ENCODE measurements at regions of chr12 and their contacts with region 1.

Region 1: DNA sequence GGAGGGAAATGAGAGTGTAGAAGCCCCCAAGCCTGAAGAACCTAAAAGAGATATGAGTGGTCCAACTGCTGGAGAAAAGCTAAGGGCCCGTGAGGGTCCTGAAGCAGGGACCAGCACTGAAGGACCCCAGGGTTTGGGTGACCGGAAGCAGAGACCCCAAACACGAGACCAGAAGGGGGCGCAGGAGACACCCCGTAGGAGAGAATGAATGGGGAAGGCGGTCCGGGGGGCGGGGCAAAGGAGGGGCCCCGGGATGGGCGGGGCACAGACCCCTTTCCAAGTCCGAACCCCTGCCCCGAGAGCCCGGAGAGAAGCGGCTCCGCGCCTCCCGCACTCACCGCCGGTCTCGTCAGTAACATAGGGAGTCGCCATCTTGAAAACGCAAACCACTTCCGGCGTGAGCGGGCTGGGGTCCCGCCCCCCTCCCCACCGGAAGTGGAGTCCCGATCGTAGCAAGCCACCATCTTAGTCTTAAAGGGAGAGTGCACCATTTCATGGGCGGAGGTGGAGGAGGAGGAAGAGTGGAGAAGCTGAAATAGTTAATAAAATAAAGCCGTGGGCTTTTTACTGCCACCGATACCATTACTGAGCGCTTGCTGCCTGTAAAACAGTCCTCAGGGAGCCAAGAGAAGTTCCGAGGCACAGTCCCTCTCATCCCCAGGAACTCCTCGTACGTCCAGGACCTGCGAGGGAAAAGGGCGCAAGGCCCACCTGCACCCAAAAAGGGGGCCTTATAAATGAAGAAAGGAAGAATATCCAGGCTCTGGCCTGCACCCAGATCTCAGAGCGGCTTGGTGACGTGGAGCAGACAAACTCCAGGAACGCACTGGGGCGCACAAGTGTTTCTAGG is 731 bp downstream of the PYM1 start:
- DNase-seq: peak; percentile 75 to 96 (median 88)
- ATAC-seq: peak; percentile 35
- H3K4me3 ChIP-seq: peak overlapping the region; percentile 90 to 98
- H3K4me3 Mint-ChIP-seq: peak overlapping the region; percentile 99
- H3K27ac ChIP-seq: peak overlapping the region; percentile 65 to 80
- H3K27ac Mint-ChIP-seq: peak overlapping the region; percentile 95
- H3K4me1 ChIP-seq: peaks cover 40% of the 10 kb centered on the region
- H3K4me1 Mint-ChIP-seq: peaks cover 51% of the 10 kb centered on the region
- H3K27me3 ChIP-seq: no peaks in the 10 kb centered on the region
- H3K27me3 Mint-ChIP-seq: no peaks in the 10 kb centered on the region
- CTCF ChIP-seq: peak; percentile 70

Region 2: GRCh38 chr12:55817346-55818139 is 109.4 kb before region 1 on chr12 and contains the starts of genes ORMDL2 and SARNP:
- CTCF ChIA-PET with region 1: interaction called, 10 read pairs
- POLR2A ChIA-PET with region 1: interaction called, 43 read pairs
- intact Hi-C with region 1: loop called (anchors 1 to 2 kb)
- DNase-seq: peak; percentile 88 to 100 (median 94)
- ATAC-seq: peak; percentile 91
- H3K4me3 ChIP-seq: peak within 1 kb of the TSS; percentile 81 to 89
- H3K4me3 Mint-ChIP-seq: no peak within 1 kb of the TSS
- H3K27ac ChIP-seq: peak within 1 kb of the TSS; percentile 81 to 89
- H3K27ac Mint-ChIP-seq: no peak within 1 kb of the TSS
- H3K4me1 ChIP-seq: peaks cover 38% of the 10 kb centered on the region
- H3K4me1 Mint-ChIP-seq: peaks cover 44% of the 10 kb centered on the region
- H3K27me3 ChIP-seq: no peaks in the 10 kb centered on the region
- H3K27me3 Mint-ChIP-seq: no peaks in the 10 kb centered on the region
- CTCF ChIP-seq: no peak
- total RNA-seq, gene ORMDL2: 13.2 to 15.1 TPM
- total RNA-seq, gene SARNP: 48.0 to 50.3 TPM

Region 3: DNA sequence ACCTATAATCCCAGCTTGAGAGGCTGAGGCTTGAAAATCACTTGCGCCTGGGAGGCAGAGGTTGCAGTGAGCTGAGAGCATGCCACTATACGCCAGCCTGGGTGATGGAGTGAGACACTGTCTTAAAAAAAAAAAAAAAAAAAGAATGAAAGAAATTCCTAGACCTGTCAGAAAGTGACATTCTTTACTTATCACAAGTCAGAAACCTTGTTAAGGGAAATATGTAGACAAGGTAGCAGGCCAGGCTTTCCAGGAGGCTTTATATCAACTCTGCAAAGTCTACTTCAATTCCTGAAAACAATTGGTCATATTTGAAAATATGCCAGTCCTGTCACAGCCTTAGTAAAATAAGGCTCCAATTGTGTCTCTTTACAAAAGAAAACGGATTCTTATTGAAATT is 65.1 kb before region 1 on chr12:
- CTCF ChIA-PET with region 1: no interaction called
- POLR2A ChIA-PET with region 1: no interaction called
- intact Hi-C with region 1: no loop called
- DNase-seq: no peak
- ATAC-seq: no peak
- H3K4me3 ChIP-seq: no peak overlapping the region
- H3K4me3 Mint-ChIP-seq: no peak overlapping the region
- H3K27ac ChIP-seq: no peak overlapping the region
- H3K27ac Mint-ChIP-seq: no peak overlapping the region
- H3K4me1 ChIP-seq: no peaks in the 10 kb centered on the region
- H3K4me1 Mint-ChIP-seq: no peaks in the 10 kb centered on the region
- H3K27me3 ChIP-seq: no peaks in the 10 kb centered on the region
- H3K27me3 Mint-ChIP-seq: no peaks in the 10 kb centered on the region
- CTCF ChIP-seq: no peak

Region 4: GRCh38 chr12:55955800-55956508 is 29.0 kb after region 1 on chr12:
- CTCF ChIA-PET with region 1: interaction called, 4 read pairs
- POLR2A ChIA-PET with region 1: interaction called, 15 read pairs
- intact Hi-C with region 1: no loop called
- DNase-seq: peak in 8 of 9 experiments; percentile 33 to 69 (median 53)
- ATAC-seq: peak; percentile 80
- H3K4me3 ChIP-seq: no peak overlapping the region
- H3K4me3 Mint-ChIP-seq: no peak overlapping the region
- H3K27ac ChIP-seq: peak overlapping the region in 1 of 2 experiments; percentile 18
- H3K27ac Mint-ChIP-seq: peak overlapping the region; percentile 88
- H3K4me1 ChIP-seq: no peaks in the 10 kb centered on the region
- H3K4me1 Mint-ChIP-seq: peaks cover 31% of the 10 kb centered on the region
- H3K27me3 ChIP-seq: no peaks in the 10 kb centered on the region
- H3K27me3 Mint-ChIP-seq: no peaks in the 10 kb centered on the region
- CTCF ChIP-seq: peak; percentile 34

Region 5: DNA sequence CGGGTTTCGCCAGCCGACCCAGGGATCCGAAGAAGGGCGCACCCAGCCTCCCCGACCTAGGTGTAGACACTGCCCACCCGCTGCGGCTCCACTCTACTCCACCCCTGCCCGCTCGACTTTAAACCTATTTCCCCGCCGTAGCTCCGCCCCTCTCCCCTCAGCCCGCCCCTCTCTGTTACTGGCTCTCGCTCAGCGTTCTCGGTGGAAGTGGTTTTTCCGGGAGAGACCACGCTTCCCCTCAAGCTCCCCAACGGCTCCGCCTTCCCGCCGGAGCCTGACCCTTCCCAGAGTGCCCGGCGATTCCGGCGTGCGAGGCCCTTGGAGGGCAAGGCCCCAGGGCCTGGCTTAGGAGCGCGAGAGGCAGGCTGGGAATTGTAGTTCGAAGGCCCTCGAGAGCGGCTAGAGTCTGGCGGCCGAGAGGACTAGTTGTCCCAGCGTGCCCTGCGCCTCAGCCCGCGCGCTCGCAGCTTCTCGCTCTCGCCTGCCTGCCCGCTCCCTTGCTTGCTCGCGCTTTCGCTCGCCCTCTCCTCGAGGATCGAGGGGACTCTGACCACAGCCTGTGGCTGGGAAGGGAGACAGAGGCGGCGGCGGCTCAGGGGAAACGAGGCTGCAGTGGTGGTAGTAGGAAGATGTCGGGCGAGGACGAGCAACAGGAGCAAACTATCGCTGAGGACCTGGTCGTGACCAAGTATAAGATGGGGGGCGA is 177.3 kb after region 1 on chr12 and contains the start of gene PA2G4:
- CTCF ChIA-PET with region 1: no interaction called
- POLR2A ChIA-PET with region 1: no interaction called
- intact Hi-C with region 1: loop called (anchors 2 to 5 kb)
- DNase-seq: peak; percentile 91 to 99 (median 96)
- ATAC-seq: peak; percentile 88
- H3K4me3 ChIP-seq: peak within 1 kb of the TSS; percentile 90
- H3K4me3 Mint-ChIP-seq: peak within 1 kb of the TSS; percentile 99
- H3K27ac ChIP-seq: peak within 1 kb of the TSS; percentile 53 to 70
- H3K27ac Mint-ChIP-seq: peak within 1 kb of the TSS; percentile 98
- H3K4me1 ChIP-seq: peaks cover 37% of the 10 kb centered on the region
- H3K4me1 Mint-ChIP-seq: peaks cover 66% of the 10 kb centered on the region
- H3K27me3 ChIP-seq: no peaks in the 10 kb centered on the region
- H3K27me3 Mint-ChIP-seq: no peaks in the 10 kb centered on the region
- CTCF ChIP-seq: no peak
- total RNA-seq, gene PA2G4: 61.6 to 62.4 TPM

Region 6: DNA sequence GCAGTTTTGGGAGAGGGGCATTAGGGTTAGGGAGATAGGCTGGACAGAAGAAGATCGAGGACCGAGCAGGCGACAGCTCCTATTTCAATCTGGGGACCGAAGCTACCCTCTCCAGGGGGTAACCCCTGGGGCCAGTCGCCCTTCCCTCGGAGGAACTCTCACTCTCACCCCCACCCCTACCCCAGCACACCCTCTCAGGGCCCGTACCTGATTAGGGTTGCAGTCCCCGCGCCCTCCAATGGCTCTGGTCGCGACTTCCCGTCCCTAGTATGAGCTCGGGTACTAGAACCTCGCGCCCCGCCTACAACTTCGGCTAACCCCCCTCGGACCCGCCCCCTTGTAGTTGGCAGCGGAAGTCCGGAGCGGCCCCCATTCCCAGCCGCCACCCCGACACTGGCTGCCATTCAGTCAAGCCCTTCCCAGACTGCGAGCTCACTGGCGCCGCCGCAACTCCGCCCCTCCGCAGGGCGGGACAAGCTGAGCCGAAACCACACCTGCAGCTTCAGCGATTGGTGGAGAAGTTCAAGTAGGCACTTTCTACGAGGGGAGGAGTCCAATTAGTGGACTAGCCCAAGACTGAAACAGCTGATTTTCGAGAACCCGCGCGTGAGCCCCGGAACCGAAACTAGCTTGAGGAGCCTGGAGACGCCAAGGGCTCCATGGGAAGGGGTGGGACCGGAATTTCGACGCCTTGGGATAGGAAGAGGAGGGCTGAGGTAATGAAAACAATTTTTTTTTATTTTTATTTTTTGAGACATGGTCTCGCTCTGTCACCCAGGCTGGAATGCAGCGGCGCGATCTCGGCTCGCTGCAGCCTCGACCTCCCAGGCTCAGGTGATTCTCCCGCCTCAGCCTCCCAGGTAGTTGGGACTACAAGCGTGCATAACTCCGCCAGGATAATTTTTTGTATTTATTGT is 433.1 kb after region 1 on chr12 and contains the start of gene STAT2:
- CTCF ChIA-PET with region 1: no interaction called
- POLR2A ChIA-PET with region 1: no interaction called
- intact Hi-C with region 1: loop called in 1 of 2 experiments (anchors 1 kb)
- DNase-seq: peak; percentile 98 to 100 (median 99)
- ATAC-seq: peak; percentile 93
- H3K4me3 ChIP-seq: peak within 1 kb of the TSS; percentile 78 to 81
- H3K4me3 Mint-ChIP-seq: peak within 1 kb of the TSS; percentile 95
- H3K27ac ChIP-seq: peak within 1 kb of the TSS; percentile 76 to 78
- H3K27ac Mint-ChIP-seq: peak within 1 kb of the TSS; percentile 95
- H3K4me1 ChIP-seq: peaks cover 23% of the 10 kb centered on the region
- H3K4me1 Mint-ChIP-seq: peaks cover 34% of the 10 kb centered on the region
- H3K27me3 ChIP-seq: no peaks in the 10 kb centered on the region
- H3K27me3 Mint-ChIP-seq: no peaks in the 10 kb centered on the region
- CTCF ChIP-seq: no peak
- total RNA-seq, gene STAT2: 71.8 to 81.9 TPM

Region 7: GRCh38 chr12:57751788-57752667 is 1825.1 kb after region 1 on chr12 and contains the start of gene CDK4:
- CTCF ChIA-PET with region 1: no interaction called
- POLR2A ChIA-PET with region 1: no interaction called
- intact Hi-C with region 1: loop called in 1 of 2 experiments (anchors 5 kb)
- DNase-seq: peak; percentile 96 to 100 (median 99)
- ATAC-seq: peak; percentile 78
- H3K4me3 ChIP-seq: peak within 1 kb of the TSS; percentile 80 to 85
- H3K4me3 Mint-ChIP-seq: peak within 1 kb of the TSS; percentile 90
- H3K27ac ChIP-seq: peak within 1 kb of the TSS; percentile 84 to 92
- H3K27ac Mint-ChIP-seq: peak within 1 kb of the TSS; percentile 88
- H3K4me1 ChIP-seq: peaks cover 50% of the 10 kb centered on the region
- H3K4me1 Mint-ChIP-seq: peaks cover 57% of the 10 kb centered on the region
- H3K27me3 ChIP-seq: no peaks in the 10 kb centered on the region
- H3K27me3 Mint-ChIP-seq: no peaks in the 10 kb centered on the region
- CTCF ChIP-seq: no peak
- total RNA-seq, gene CDK4: 8.5 to 10.0 TPM

Measured in CD8-positive, alpha-beta T cell (primary cell).